Adrenal gland (tissue), 19 donors: ENCODE measurements at regions of chr11 and their contacts with region 1.

Region 1: DNA sequence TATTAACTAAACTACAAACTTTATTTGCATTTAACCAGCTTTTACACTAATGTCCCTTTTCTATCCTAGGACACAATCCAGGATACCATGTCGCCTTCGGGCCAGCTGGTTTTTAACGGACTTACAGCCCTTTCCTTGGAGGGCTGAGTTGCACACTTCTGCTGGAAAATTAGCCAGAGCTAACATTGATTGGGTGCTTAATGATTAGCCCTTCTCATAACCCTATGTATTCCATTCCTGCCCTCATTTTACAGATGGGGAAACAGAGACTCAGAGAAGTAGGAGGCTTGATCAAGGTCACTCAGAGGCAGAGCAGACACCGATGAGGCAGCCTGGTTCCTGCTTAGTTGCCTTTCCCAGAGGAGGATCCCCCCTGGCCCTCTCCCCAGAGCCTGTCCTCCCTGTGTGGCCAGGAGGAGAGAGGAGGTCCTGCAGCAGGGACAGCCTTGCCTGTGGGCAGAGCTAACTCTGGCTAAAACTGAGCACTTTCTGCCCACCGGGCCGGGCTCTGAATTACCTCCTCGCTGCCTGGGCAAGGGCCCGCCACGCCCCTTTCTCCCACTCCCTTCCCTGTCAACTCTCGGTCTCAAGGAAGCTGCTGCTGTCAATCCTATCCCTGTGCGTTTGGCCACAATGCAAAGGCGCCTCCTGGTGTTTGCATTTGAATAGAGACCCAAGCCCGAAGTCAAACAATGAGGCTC is 59.6 kb upstream of the PAX6 start:
- DNase-seq: peak; percentile 16 to 69 (median 47)
- H3K4me3 ChIP-seq: no peak overlapping the region
- H3K27ac ChIP-seq: no peak overlapping the region
- H3K4me1 ChIP-seq: no peaks in the 10 kb centered on the region
- H3K27me3 ChIP-seq: peaks cover 19% of the 10 kb centered on the region
- CTCF ChIP-seq: peak; percentile 43 to 73 (median 58)
- POLR2A ChIP-seq: no peak

Region 2: GRCh38 chr11:31397239-31397834 is 473.4 kb before region 1 on chr11:
- intact Hi-C with region 1: loop called in 1 of 2 experiments (anchors 5 kb)
- DNase-seq: no peak
- H3K4me3 ChIP-seq: no peak overlapping the region
- H3K27ac ChIP-seq: no peak overlapping the region
- H3K4me1 ChIP-seq: no peaks in the 10 kb centered on the region
- H3K27me3 ChIP-seq: no peaks in the 10 kb centered on the region
- CTCF ChIP-seq: peak; percentile 29 to 75 (median 54)
- POLR2A ChIP-seq: no peak

Region 3: GRCh38 chr11:31492320-31492913 is 378.3 kb before region 1 on chr11:
- intact Hi-C with region 1: loop called in 1 of 2 experiments (anchors 5 kb)
- DNase-seq: peak in 1 of 7 donors; percentile 10
- H3K4me3 ChIP-seq: no peak overlapping the region
- H3K27ac ChIP-seq: no peak overlapping the region
- H3K4me1 ChIP-seq: no peaks in the 10 kb centered on the region
- H3K27me3 ChIP-seq: no peaks in the 10 kb centered on the region
- CTCF ChIP-seq: no peak
- POLR2A ChIP-seq: no peak

Region 4: GRCh38 chr11:31903225-31904074 is 32.7 kb after region 1 on chr11:
- intact Hi-C with region 1: no loop called
- DNase-seq: no peak
- H3K4me3 ChIP-seq: no peak overlapping the region
- H3K27ac ChIP-seq: no peak overlapping the region
- H3K4me1 ChIP-seq: no peaks in the 10 kb centered on the region
- H3K27me3 ChIP-seq: no peaks in the 10 kb centered on the region
- CTCF ChIP-seq: no peak
- POLR2A ChIP-seq: no peak